PC-3 (cell line): ENCODE measurements at regions of chr7 and their contacts with region 1.

Region 1: GRCh38 chr7:131424219-131424822 is 96.6 kb downstream of the MKLN1 start:
- DNase-seq: peak; percentile 57
- ATAC-seq: peak; percentile 96
- H3K4me3 ChIP-seq: no peak overlapping the region
- H3K27ac ChIP-seq: no peak overlapping the region
- H3K4me1 ChIP-seq: no peaks in the 10 kb centered on the region
- H3K27me3 ChIP-seq: no peaks in the 10 kb centered on the region
- CTCF ChIP-seq: peak; percentile 78

Region 2: DNA sequence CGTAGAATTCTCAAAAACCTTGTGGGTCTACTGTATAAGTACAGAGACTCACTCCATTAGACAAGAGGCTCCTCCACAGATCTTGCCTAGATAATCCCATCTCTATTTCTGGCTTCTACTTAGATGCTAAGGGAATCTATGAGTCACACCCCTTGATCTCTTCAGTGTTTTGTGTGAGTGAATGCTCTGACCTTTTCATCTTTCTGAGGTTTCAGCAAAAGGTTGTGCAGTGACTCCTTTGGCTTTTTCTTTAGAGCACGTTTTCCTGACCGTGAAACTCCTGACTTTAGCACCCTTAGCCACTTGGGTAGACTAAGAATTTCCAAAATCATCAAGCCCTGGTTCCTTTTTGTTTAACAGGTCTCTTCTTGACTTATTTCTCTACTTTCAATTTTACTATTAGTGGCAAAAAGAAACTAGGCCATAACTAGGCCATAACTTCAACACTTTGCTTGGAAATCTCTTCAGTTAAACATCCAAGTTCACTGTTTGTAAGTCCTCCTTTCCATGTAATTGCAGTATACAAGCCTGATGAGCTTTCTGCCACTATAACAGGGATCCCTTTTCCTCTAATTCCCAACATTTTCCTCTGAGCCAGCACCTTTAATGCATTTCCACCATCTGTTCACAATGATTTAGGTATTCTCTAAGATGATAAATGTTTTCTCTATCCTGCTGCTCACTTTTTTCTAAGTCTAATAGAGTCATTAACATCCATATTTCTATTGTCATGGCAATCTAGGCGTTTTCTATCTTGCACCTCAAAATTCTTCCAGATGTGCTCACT is 775.1 kb before region 1 on chr7:
- CTCF ChIA-PET with region 1: no interaction called
- POLR2A ChIA-PET with region 1: no interaction called
- intact Hi-C with region 1: no loop called
- DNase-seq: no peak
- ATAC-seq: no peak
- H3K4me3 ChIP-seq: no peak overlapping the region
- H3K27ac ChIP-seq: no peak overlapping the region
- H3K4me1 ChIP-seq: no peaks in the 10 kb centered on the region
- H3K27me3 ChIP-seq: no peaks in the 10 kb centered on the region
- CTCF ChIP-seq: no peak

Region 3: DNA sequence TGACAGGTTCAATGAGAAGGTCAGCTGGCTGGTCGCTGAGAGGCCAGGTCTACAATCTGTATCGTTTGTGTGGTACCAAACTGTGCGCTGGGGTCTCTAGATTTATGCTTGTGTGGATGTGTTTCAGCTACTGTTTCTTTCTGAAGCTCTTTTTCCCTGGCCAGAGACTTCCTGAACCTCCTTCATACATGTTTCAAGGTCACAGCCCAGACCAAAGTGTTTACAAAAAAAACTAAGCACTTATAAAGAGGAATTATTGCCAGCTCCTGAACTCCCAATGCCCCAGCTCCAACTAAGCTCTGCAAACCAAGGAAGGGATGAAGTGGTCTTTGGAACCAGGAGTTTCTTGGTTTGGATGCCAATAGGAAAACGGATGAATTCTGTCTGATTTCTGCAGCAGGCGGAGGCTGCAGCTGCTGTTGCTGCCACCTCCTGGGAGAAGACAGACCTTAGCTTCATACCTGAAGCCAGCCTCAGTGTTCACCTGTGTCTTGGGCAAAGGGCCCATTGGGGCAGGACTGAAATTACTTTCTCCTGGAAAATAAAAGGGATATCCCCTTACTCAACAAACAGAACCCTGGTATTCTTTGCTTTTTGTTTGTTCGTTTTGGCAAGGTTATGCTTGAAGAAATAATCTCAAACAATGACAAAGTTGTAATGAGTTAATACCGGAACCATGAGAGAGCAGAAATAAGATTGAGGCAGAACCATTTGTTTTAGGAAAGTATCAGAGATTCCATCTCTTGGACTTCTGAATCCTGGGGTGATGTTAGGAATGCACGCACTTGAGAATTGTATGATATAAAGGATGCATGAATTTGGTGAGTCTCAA is 121.2 kb before region 1 on chr7:
- CTCF ChIA-PET with region 1: no interaction called
- POLR2A ChIA-PET with region 1: no interaction called
- intact Hi-C with region 1: loop called (anchors 1 kb)
- DNase-seq: peak; percentile 65
- ATAC-seq: peak; percentile 88
- H3K4me3 ChIP-seq: no peak overlapping the region
- H3K27ac ChIP-seq: no peak overlapping the region
- H3K4me1 ChIP-seq: no peaks in the 10 kb centered on the region
- H3K27me3 ChIP-seq: no peaks in the 10 kb centered on the region
- CTCF ChIP-seq: peak; percentile 84

Region 4: DNA sequence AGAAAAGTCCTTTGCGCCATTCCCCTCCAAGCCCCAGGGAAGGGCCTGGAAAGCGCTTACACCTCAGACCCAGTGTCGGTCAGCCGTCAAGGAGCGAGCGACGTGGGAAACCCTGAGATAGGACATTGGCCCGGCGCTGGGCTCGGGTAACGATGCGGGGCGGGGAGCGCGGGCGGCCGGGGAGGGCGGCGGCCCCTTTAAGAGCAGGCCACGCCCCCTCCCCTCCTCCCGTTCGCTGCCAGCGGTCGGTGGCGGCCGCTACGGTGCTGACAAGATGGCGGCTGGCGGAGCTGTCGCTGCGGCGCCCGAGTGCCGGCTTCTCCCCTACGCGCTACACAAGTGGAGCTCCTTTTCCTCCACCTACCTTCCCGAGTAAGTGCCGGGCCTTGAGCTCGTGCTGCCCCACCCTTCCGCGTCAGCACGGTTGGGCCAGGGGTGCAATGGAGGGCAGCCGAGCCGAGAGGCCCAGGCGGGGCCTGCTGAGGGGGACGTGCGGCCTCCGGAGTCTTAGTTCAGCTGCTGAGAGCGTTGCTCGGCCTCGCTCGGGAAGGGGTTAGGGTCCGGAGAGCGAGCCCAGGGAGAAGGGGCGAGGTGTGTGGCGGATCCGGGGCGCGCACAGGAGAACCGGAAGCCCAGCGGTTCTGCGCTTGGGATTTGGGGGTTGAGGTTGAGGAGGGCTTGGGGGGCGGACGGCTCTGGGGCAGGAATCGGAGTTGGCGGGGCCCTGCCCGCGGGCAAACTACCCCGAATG is 96.5 kb before region 1 on chr7 and contains the start of gene MKLN1:
- CTCF ChIA-PET with region 1: interaction called, 3 read pairs
- POLR2A ChIA-PET with region 1: no interaction called
- intact Hi-C with region 1: loop called (anchors 2 kb)
- DNase-seq: peak; percentile 85
- ATAC-seq: peak; percentile 88
- H3K4me3 ChIP-seq: peak within 1 kb of the TSS; percentile 88
- H3K27ac ChIP-seq: peak within 1 kb of the TSS; percentile 66
- H3K4me1 ChIP-seq: peaks cover 30% of the 10 kb centered on the region
- H3K27me3 ChIP-seq: no peaks in the 10 kb centered on the region
- CTCF ChIP-seq: no peak
- total RNA-seq, gene MKLN1: 15.3 and 16.3 TPM in 2 replicates

Region 5: DNA sequence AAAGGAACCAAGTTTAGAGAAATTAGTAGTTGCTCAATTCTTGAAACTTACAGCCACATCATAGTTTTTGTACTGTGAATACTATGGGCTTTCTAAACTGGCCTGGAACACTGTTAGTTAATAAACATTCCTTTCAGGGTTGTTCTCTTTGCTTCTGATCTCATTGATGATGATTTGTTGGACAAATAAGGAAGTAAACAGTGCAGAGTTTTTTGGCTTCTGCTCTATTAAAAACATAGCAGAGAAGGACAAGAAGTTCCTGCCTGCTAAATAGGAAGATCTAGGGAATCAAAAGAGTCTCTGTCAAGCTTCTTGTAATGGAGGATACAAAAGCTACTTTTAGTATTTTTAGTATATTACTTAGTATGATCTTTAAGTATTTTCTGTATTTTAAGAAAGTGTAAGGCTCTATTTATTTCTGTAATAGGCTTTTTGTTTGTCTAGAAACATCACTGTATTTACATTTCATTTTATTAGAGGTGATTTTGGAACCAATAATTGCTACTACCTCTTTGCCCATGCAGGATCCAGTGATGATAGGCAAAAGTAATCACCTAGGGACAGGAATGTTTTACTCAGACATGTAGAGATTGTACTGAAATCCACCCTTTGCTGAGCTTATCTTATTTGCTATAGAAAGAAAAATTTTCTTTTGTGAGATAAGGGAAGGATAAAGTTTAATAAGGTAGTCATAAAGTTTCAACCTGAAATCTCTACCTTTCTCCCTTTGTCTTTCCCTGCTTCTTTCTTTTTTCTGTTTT is 23.3 kb before region 1 on chr7:
- CTCF ChIA-PET with region 1: no interaction called
- POLR2A ChIA-PET with region 1: no interaction called
- intact Hi-C with region 1: no loop called
- DNase-seq: peak; percentile 35
- ATAC-seq: peak; percentile 94
- H3K4me3 ChIP-seq: no peak overlapping the region
- H3K27ac ChIP-seq: peak overlapping the region; percentile 12; the same call in 1 of the 2 replicates
- H3K4me1 ChIP-seq: peaks cover 6% of the 10 kb centered on the region; the same call in 1 of the 2 replicates
- H3K27me3 ChIP-seq: no peaks in the 10 kb centered on the region
- CTCF ChIP-seq: no peak